Activated T-helper 2 cell treated with anti-CD3 and anti-CD28 coated beads, Interferon-gamma antibody, Interleukin-2, Interleukin-4, amounts not matched to agents 10 μg/mL and 5 μg/mL and 100 μg/mL, durations not matched to agents 14 hours and 24 hours and 36 hours (primary cell): ENCODE measurements at regions of chr1 and their contacts with region 1.

Region 1: DNA sequence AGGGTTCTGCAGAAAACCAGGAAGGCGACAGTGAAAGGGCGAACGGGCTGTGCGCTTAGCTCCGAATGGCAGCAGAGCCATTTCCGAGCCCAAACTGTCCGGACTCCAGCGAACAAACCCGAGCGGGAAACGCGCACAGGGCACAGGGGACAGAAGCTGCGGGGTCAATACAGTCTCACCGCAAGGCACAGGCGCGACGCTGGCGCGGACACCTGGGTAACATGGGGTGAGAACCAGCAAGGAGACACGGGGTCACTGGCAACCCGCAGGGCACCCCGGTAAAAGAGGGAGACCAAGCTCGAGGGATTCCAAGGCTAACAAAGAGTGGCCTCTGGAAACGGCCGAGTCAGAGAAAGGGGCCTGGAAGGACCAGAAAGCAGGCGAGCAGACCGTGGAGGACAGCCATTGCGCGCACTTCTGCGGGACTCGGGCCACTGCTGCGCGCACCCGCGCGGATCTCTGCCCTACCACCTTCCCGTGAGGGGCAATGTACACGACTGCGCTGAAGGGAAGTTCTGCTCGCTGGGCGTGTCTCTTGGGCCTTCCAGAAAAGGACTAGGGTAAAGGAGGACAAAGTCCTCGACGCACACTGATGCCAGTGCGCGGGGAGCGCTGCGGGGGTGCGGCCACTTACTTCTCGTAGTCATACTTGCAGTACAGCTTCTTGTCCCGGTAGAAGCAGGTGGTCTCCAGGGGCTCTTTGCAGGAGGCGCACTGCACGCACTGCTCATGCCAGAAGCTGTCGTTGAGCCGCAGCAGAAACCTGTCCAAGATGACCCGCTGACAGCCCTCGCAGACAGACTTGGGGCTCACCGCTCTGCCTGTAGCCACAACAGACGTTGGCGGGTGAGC is 3.8 kb downstream of the LMX1A start:
- DNase-seq: no peak
- H3K4me3 Mint-ChIP-seq: no peak overlapping the region
- H3K27ac Mint-ChIP-seq: no peak overlapping the region
- H3K4me1 Mint-ChIP-seq: peaks cover 2% of the 10 kb centered on the region
- H3K27me3 Mint-ChIP-seq: peaks cover 82% of the 10 kb centered on the region

Region 2: DNA sequence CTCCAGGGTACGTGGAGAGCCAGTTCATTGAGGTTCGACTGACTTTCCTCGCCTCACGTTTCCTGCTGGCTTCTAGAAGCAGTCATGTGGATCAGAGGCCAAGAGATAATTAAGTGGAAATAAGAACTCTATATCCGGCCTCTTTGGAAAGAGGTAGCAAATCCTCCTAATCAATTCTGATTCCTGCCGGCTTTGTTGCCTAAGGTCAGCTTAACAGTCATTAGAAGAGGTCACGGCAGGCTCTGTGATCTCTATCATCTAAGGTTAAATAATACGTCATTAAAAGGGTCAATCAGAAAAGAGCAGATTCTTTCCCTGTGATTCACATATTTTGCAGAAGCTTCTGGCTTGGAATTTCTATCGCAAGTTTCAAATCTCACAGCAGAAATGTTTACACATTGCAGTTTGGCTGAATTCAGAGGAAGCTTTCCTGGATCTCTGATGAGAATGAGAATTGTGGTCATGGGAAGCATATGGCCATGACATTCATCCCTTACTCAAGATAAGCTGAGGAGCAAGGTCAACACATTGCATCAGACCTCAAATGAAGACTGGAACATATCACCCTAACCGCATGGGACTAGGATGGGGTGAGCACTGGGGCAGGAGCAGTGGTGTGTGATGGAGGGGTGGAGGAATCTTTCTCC is 604.3 kb before region 1 on chr1:
- intact Hi-C with region 1: no loop called
- DNase-seq: no peak
- H3K4me3 Mint-ChIP-seq: no peak overlapping the region
- H3K27ac Mint-ChIP-seq: no peak overlapping the region
- H3K4me1 Mint-ChIP-seq: no peaks in the 10 kb centered on the region
- H3K27me3 Mint-ChIP-seq: peaks cover 2% of the 10 kb centered on the region

Region 3: DNA sequence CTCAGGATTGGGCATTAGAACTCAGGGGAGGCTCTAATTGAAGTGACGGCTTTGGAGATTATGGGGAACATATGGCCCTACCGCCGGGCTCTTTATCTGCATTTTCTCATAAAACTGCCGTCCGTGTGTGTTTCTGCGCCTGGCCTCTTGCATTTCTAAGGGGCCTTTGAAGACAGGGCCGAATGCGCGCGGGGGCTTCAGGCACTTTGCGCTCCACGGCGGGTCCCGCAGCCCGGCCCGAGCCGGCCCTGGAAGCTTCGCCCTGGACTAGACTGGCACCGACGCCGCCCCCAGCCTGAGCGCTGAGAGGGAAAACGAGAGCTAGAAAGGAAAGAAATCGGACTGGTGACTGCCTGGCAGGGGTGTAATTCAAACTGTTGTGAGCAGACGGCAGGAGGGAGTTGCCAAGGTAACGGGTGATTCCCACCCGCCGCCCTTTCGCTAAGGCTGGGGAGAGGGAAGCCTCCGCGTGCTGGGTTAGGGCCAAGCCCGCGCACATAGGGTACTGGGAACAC is 116.8 kb before region 1 on chr1:
- intact Hi-C with region 1: loop called (anchors 5 kb)
- DNase-seq: no peak
- H3K4me3 Mint-ChIP-seq: no peak overlapping the region
- H3K27ac Mint-ChIP-seq: no peak overlapping the region
- H3K4me1 Mint-ChIP-seq: peaks cover 1% of the 10 kb centered on the region
- H3K27me3 Mint-ChIP-seq: peaks cover 48% of the 10 kb centered on the region

Region 4: GRCh38 chr1:165317612-165318011 is 35.1 kb before region 1 on chr1:
- intact Hi-C with region 1: no loop called
- DNase-seq: no peak
- H3K4me3 Mint-ChIP-seq: no peak overlapping the region
- H3K27ac Mint-ChIP-seq: no peak overlapping the region
- H3K4me1 Mint-ChIP-seq: no peaks in the 10 kb centered on the region
- H3K27me3 Mint-ChIP-seq: peaks cover 15% of the 10 kb centered on the region

Region 5: DNA sequence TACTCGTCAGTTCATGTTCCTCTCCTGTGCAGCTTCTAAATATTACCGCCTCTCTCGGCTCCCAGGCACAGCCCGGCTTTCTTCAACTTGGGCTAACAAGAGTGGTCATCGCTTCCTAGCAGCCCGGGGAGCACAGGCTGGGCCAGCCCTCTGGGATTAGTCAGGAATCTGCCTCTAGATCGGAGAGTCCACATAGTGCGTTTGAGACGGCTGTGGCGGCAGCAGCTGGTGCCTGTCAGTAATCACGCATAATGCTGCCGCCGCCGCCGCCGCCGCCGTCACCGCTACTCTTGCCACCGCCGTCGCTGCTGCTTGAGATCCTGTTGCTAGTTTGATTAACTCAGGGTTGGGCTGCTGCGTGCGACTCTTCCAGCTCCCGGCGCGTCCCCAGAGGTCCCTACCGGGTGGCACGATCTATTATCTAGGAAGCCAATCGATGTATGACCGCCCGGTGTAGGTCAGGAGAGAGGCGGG is 92.3 kb after region 1 on chr1 and contains the start of gene RXRG:
- intact Hi-C with region 1: loop called (anchors 5 kb)
- DNase-seq: no peak
- H3K4me3 Mint-ChIP-seq: no peak within 1 kb of the TSS
- H3K27ac Mint-ChIP-seq: no peak within 1 kb of the TSS
- H3K4me1 Mint-ChIP-seq: no peaks in the 10 kb centered on the region
- H3K27me3 Mint-ChIP-seq: peaks cover 33% of the 10 kb centered on the region
- total RNA-seq, gene RXRG: not detected in 2 replicates